Activated T-helper 1 cell treated with anti-CD3 and anti-CD28 coated beads, Interleukin-12 subunit alpha, Interleukin-12 subunit beta, Interleukin-2, Interleukin-4 antibody, amounts not matched to agents 30 ng/mL and 10 ng/mL and 1 ng/mL, durations not matched to agents 14 hours and 24 hours and 36 hours (primary cell): ENCODE measurements at regions of chrX and their contacts with region 1.

Region 1: GRCh38 chrX:71128915-71129765 is 10.7 kb downstream of the MED12 start:
- DNase-seq: peak; percentile 61
- H3K4me3 Mint-ChIP-seq: peak overlapping the region; percentile 46
- H3K27ac Mint-ChIP-seq: peak overlapping the region; percentile 63
- H3K4me1 Mint-ChIP-seq: peaks cover 19% of the 10 kb centered on the region
- H3K27me3 Mint-ChIP-seq: peaks cover 1% of the 10 kb centered on the region

Region 2: DNA sequence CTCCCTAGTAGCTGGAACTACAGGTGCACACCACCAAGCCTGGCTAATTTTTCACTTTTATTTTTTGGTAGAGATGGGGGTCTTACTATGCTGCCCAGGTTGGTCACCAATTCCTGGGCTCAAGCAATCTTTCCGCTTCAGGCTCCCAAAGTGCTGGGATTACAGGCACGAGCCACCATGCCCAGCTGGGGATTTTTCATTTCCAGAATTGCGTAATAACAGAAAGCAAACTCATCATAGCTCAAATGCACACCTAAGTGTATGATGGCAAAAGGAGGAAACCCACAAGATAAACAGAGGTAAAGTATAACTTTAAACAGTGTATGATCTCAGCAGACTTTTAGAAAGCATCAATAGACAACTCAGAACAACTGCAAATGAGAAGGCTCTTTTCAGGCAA is 276.8 kb before region 1 on chrX:
- intact Hi-C with region 1: no loop called
- DNase-seq: no peak
- H3K4me3 Mint-ChIP-seq: no peak overlapping the region
- H3K27ac Mint-ChIP-seq: no peak overlapping the region
- H3K4me1 Mint-ChIP-seq: no peaks in the 10 kb centered on the region
- H3K27me3 Mint-ChIP-seq: peaks cover 7% of the 10 kb centered on the region

Region 3: GRCh38 chrX:70970482-70970995 is 158.6 kb before region 1 on chrX:
- intact Hi-C with region 1: loop called (anchors 1 kb)
- DNase-seq: no peak
- H3K4me3 Mint-ChIP-seq: no peak overlapping the region
- H3K27ac Mint-ChIP-seq: no peak overlapping the region
- H3K4me1 Mint-ChIP-seq: peaks cover 6% of the 10 kb centered on the region
- H3K27me3 Mint-ChIP-seq: peaks cover 8% of the 10 kb centered on the region

Region 4: GRCh38 chrX:71095543-71095911 is 33.6 kb before region 1 on chrX and contains the start of gene FOXO4:
- intact Hi-C with region 1: loop called (anchors 1 kb)
- DNase-seq: peak; percentile 81
- H3K4me3 Mint-ChIP-seq: peak within 1 kb of the TSS; percentile 93
- H3K27ac Mint-ChIP-seq: peak within 1 kb of the TSS; percentile 91
- H3K4me1 Mint-ChIP-seq: peaks cover 33% of the 10 kb centered on the region
- H3K27me3 Mint-ChIP-seq: peaks cover 8% of the 10 kb centered on the region
- total RNA-seq, gene FOXO4: 10.7 and 11.9 TPM in 2 replicates

Region 5: GRCh38 chrX:71103110-71103983 is 25.8 kb before region 1 on chrX:
- intact Hi-C with region 1: loop called (anchors 1 kb)
- DNase-seq: peak; percentile 29
- H3K4me3 Mint-ChIP-seq: peak overlapping the region; percentile 86
- H3K27ac Mint-ChIP-seq: peak overlapping the region; percentile 92
- H3K4me1 Mint-ChIP-seq: peaks cover 74% of the 10 kb centered on the region
- H3K27me3 Mint-ChIP-seq: no peaks in the 10 kb centered on the region

Region 6: GRCh38 chrX:71111141-71111843 is 17.8 kb before region 1 on chrX and contains the start of gene IL2RG:
- intact Hi-C with region 1: loop called (anchors 1 kb)
- DNase-seq: peak; percentile 75
- H3K4me3 Mint-ChIP-seq: peak within 1 kb of the TSS; percentile 99
- H3K27ac Mint-ChIP-seq: peak within 1 kb of the TSS; percentile 92
- H3K4me1 Mint-ChIP-seq: peaks cover 52% of the 10 kb centered on the region
- H3K27me3 Mint-ChIP-seq: no peaks in the 10 kb centered on the region
- total RNA-seq, gene IL2RG: 375 and 397 TPM in 2 replicates

Region 7: GRCh38 chrX:71118032-71118984 is 10.8 kb before region 1 on chrX and contains the start of gene MED12:
- intact Hi-C with region 1: loop called (anchors 1 kb)
- DNase-seq: peak; percentile 76
- H3K4me3 Mint-ChIP-seq: peak within 1 kb of the TSS; percentile 85
- H3K27ac Mint-ChIP-seq: peak within 1 kb of the TSS; percentile 82
- H3K4me1 Mint-ChIP-seq: peaks cover 20% of the 10 kb centered on the region
- H3K27me3 Mint-ChIP-seq: no peaks in the 10 kb centered on the region
- total RNA-seq, gene MED12: 59.9 and 65.4 TPM in 2 replicates